Right ventricle myocardium superior (tissue), 1 donor: ENCODE measurements at regions of chr4 and their contacts with region 1.

Region 1: GRCh38 chr4:38062088-38062893 is 102.1 kb downstream of the PTTG2 start:
- DNase-seq: peak; percentile 85
- ATAC-seq: peak; percentile 89

Region 2: GRCh38 chr4:38319456-38320342 is 257.4 kb after region 1 on chr4:
- intact Hi-C with region 1: loop called (anchors 10 kb)
- DNase-seq: peak; percentile 97
- ATAC-seq: peak; percentile 88

Region 3: DNA sequence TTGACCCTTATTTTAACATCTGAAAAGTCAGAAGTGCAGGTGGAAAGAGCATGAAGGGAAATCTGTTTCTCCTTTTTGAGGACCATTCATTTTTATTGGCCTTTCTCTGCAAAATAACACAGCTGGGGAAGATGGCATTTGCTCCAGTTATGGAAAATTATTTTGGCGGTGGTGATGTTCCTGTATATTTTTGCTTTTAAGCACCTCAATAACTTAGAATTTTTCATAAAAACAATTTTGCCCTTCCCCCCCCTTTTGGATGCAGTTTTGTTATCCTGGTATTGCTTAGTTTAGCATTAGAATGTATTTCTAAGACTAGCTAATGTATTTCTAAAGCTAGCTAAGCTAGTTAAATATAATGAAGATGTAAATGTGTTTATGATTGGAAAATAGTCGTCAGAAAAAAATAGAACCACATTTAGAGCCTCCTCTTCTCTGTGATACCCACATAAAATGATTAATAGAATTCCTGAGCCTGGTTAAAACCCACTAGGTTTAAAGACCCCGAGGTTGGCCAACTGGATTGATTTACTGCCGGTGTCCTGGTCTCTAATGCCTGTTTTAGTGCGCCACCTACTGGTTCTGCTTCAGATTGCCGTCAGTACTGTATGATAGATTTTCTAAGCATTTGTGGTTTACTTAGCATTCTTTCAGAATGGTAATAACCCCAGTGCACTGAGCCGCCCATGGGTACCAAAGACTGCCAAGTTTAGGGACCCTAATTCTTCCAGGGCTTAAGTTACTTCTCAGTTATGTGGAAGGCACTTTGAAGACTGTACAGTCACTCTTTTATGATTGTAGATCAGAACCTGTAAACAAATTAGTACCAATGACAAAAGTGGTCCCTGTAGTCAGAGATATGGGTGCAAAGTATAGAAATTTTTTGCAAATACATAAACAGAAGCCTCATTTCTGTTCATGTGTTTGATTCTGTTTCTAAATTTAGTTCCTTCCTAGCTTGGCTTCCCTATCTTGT is 613.1 kb after region 1 on chr4:
- intact Hi-C with region 1: loop called (anchors 5 kb)
- DNase-seq: peak; percentile 62
- ATAC-seq: peak; percentile 68

Region 4: GRCh38 chr4:38730830-38731646 is 668.7 kb after region 1 on chr4:
- intact Hi-C with region 1: loop called (anchors 5 kb)
- DNase-seq: peak; percentile 91
- ATAC-seq: peak; percentile 93

Region 5: GRCh38 chr4:39446751-39447573 is 1384.7 kb after region 1 on chr4:
- intact Hi-C with region 1: no loop called
- DNase-seq: peak; percentile 80
- ATAC-seq: peak; percentile 77